Heart left ventricle (tissue), 16 donors: ENCODE measurements at regions of chr1 and their contacts with region 1.

Region 1: GRCh38 chr1:117758444-117759316 is 152.8 kb downstream of the TENT5C start:
- DNase-seq: peak; percentile 56 to 74 (median 60)
- ATAC-seq: peak; percentile 88 to 96 (median 92)
- H3K4me3 ChIP-seq: peak overlapping the region; percentile 1 to 57 (median 50)
- H3K27ac ChIP-seq: no peak overlapping the region
- H3K4me1 ChIP-seq: peaks cover 0 to 14% (median 3%) of the 10 kb centered on the region in 12 donors
- H3K27me3 ChIP-seq: peaks cover 0 to 4% (median 0%) of the 10 kb centered on the region in 9 donors
- CTCF ChIP-seq: peak; percentile 84 to 91 (median 88)
- POLR2A ChIP-seq: no peak

Region 2: GRCh38 chr1:117059678-117060440 is 698.8 kb before region 1 on chr1 and contains the start of gene TTF2:
- intact Hi-C with region 1: loop called in 6 of 10 experiments (anchors 5 to 10 kb)
- DNase-seq: peak; percentile 90 to 94 (median 92)
- ATAC-seq: peak; percentile 99 to 100 (median 100)
- H3K4me3 ChIP-seq: peak within 1 kb of the TSS; percentile 67 to 88 (median 73)
- H3K27ac ChIP-seq: peak within 1 kb of the TSS in 11 of 12 donors; percentile 1 to 70 (median 54)
- H3K4me1 ChIP-seq: peaks cover 0 to 27% (median 7%) of the 10 kb centered on the region in 12 donors
- H3K27me3 ChIP-seq: no peaks in the 10 kb centered on the region
- CTCF ChIP-seq: peak in 9 of 12 donors; percentile 4 to 55 (median 33)
- POLR2A ChIP-seq: peak in 1 of 2 donors; percentile 13
- total RNA-seq, gene TTF2: 2.8 to 20.7 (median 9.5) TPM

Region 3: DNA sequence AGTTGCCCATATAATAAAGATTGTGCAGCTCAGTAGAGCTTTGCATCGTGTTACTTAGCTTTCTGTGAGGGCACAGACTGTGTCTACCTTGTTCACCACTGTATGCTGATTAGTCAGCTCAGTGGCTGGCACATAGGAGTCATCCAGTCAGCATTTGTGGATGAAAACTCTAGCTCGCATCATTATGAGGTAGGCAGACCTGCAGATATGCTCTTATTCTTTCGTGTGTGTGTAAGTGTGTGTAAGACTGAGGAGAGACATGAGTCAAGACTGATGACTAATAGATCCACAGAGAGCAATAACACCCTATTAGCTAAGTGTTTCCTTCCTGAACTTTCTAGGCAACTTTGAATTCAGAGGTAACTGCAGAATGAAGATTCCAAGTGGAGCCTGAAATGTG is 681.4 kb before region 1 on chr1:
- intact Hi-C with region 1: loop called in 2 of 10 experiments (anchors 10 kb)
- DNase-seq: no peak
- ATAC-seq: peak in 2 of 4 donors; percentile 29 to 50
- H3K4me3 ChIP-seq: no peak overlapping the region
- H3K27ac ChIP-seq: no peak overlapping the region
- H3K4me1 ChIP-seq: peaks cover 0 to 4% (median 0%) of the 10 kb centered on the region in 12 donors
- H3K27me3 ChIP-seq: no peaks in the 10 kb centered on the region
- CTCF ChIP-seq: no peak
- POLR2A ChIP-seq: no peak

Region 4: DNA sequence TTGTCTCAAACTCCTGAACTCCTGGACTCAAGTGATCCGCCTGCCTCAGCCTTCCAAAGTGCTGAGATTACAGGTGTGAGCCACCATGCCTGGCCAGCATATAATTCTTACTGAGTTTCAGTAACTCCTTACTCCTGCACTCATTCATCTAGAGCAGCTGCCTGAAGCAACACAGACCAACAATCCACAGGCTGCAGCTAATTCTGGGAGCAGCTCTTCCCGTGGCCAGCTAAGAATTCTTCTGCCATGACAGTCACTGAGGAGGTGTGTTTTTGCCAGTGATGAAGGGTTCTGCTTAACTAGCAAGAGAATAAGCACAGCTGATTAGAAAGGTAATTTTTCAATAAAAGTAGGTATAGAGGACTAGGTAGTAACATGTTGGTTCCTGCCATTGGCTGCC is 553.3 kb before region 1 on chr1:
- intact Hi-C with region 1: no loop called
- DNase-seq: no peak
- ATAC-seq: no peak
- H3K4me3 ChIP-seq: no peak overlapping the region
- H3K27ac ChIP-seq: no peak overlapping the region
- H3K4me1 ChIP-seq: no peaks in the 10 kb centered on the region
- H3K27me3 ChIP-seq: peaks cover 0 to 3% (median 0%) of the 10 kb centered on the region in 9 donors
- CTCF ChIP-seq: no peak
- POLR2A ChIP-seq: no peak

Region 5: DNA sequence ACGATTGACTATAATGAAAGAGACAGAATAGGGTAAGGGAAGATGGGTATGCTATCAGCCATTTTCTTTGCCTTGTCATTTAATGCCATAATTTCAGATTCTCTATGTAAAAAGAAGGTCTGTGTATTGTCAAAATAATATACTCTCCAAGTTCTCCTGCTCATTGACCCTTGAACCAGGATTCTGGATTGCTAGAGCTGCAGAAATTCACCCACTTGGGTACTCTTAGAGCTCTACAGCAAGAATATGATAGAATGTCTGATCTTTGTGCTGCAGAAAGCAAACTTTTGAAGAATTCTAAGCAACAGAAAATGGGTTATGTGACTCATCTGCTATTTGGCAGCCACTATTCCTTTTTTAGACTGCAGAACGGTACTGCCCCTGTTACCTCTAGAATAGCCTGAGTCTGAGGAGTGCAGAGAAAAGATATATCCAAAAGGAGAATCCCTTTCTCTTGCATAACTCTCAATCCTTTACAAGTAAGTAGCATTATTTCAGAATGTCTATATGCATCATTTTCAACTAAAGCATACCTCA is 231.0 kb before region 1 on chr1:
- intact Hi-C with region 1: loop called in 1 of 10 experiments (anchors 5 kb)
- DNase-seq: no peak
- ATAC-seq: no peak
- H3K4me3 ChIP-seq: no peak overlapping the region
- H3K27ac ChIP-seq: no peak overlapping the region
- H3K4me1 ChIP-seq: no peaks in the 10 kb centered on the region
- H3K27me3 ChIP-seq: no peaks in the 10 kb centered on the region
- CTCF ChIP-seq: no peak
- POLR2A ChIP-seq: no peak

Region 6: GRCh38 chr1:117605774-117606648 is 152.7 kb before region 1 on chr1 and contains the start of gene TENT5C:
- intact Hi-C with region 1: loop called (anchors 5 to 10 kb)
- DNase-seq: peak; percentile 97 to 99 (median 98)
- ATAC-seq: peak; percentile 97 to 98 (median 98)
- H3K4me3 ChIP-seq: peak within 1 kb of the TSS; percentile 60 to 90 (median 78)
- H3K27ac ChIP-seq: peak within 1 kb of the TSS in 11 of 12 donors; percentile 75 to 86 (median 79)
- H3K4me1 ChIP-seq: peaks cover 0 to 47% (median 28%) of the 10 kb centered on the region in 12 donors
- H3K27me3 ChIP-seq: no peaks in the 10 kb centered on the region
- CTCF ChIP-seq: peak in 4 of 12 donors; percentile 3 to 15 (median 6)
- POLR2A ChIP-seq: peak; percentile 51 to 97
- total RNA-seq, gene TENT5C: 7.9 to 21.6 (median 15.1) TPM

Region 7: GRCh38 chr1:117685936-117686806 is 72.5 kb before region 1 on chr1:
- intact Hi-C with region 1: loop called in 2 of 10 experiments (anchors 5 to 10 kb)
- DNase-seq: no peak
- ATAC-seq: peak in 1 of 4 donors; percentile 7
- H3K4me3 ChIP-seq: no peak overlapping the region
- H3K27ac ChIP-seq: peak overlapping the region in 2 of 12 donors; percentile 37 to 56
- H3K4me1 ChIP-seq: peaks cover 0 to 46% (median 18%) of the 10 kb centered on the region in 12 donors
- H3K27me3 ChIP-seq: no peaks in the 10 kb centered on the region
- CTCF ChIP-seq: no peak
- POLR2A ChIP-seq: no peak

Region 8: GRCh38 chr1:117895482-117896114 is 136.9 kb after region 1 on chr1:
- intact Hi-C with region 1: loop called in 5 of 10 experiments (anchors 5 to 10 kb)
- DNase-seq: peak in 3 of 5 donors; percentile 44 to 50 (median 48)
- ATAC-seq: peak in 2 of 4 donors; percentile 34 to 45
- H3K4me3 ChIP-seq: no peak overlapping the region
- H3K27ac ChIP-seq: no peak overlapping the region
- H3K4me1 ChIP-seq: peaks cover 0 to 4% (median 0%) of the 10 kb centered on the region in 12 donors
- H3K27me3 ChIP-seq: no peaks in the 10 kb centered on the region
- CTCF ChIP-seq: peak; percentile 56 to 83 (median 72)
- POLR2A ChIP-seq: no peak